ENCODE measurements at regions of chr4 and their contacts with region 1.

Region 1: GRCh38 chr4:153497988-153498967 is 32.1 kb downstream of the TMEM131L start:
- DNase-seq: peak in 3 of 14 experiments; percentile 43 to 52 (median 45)
- ATAC-seq: peak; percentile 32
- H3K4me3 ChIP-seq: peak overlapping the region; percentile 32
- H3K4me3 Mint-ChIP-seq: peak overlapping the region; percentile 84
- H3K27ac ChIP-seq: peak overlapping the region; percentile 82 to 90
- H3K27ac Mint-ChIP-seq: peak overlapping the region; percentile 92
- H3K4me1 ChIP-seq: peaks cover 85% of the 10 kb centered on the region
- H3K4me1 Mint-ChIP-seq: peaks cover 97% of the 10 kb centered on the region
- H3K27me3 ChIP-seq: no peaks in the 10 kb centered on the region
- H3K27me3 Mint-ChIP-seq: no peaks in the 10 kb centered on the region
- CTCF ChIP-seq: no peak

Region 2: GRCh38 chr4:153488006-153488891 is 10.0 kb before region 1 on chr4:
- CTCF ChIA-PET with region 1: interaction called, 11 read pairs
- POLR2A ChIA-PET with region 1: interaction called, 434 read pairs
- intact Hi-C with region 1: loop called in 1 of 2 experiments (anchors 1 kb)
- DNase-seq: peak in 13 of 14 experiments; percentile 50 to 94 (median 67)
- ATAC-seq: peak; percentile 65
- H3K4me3 ChIP-seq: peak overlapping the region; percentile 57
- H3K4me3 Mint-ChIP-seq: peak overlapping the region; percentile 88
- H3K27ac ChIP-seq: peak overlapping the region; percentile 92 to 94
- H3K27ac Mint-ChIP-seq: peak overlapping the region; percentile 92
- H3K4me1 ChIP-seq: peaks cover 68% of the 10 kb centered on the region
- H3K4me1 Mint-ChIP-seq: peaks cover 82% of the 10 kb centered on the region
- H3K27me3 ChIP-seq: no peaks in the 10 kb centered on the region
- H3K27me3 Mint-ChIP-seq: no peaks in the 10 kb centered on the region
- CTCF ChIP-seq: no peak

Region 3: DNA sequence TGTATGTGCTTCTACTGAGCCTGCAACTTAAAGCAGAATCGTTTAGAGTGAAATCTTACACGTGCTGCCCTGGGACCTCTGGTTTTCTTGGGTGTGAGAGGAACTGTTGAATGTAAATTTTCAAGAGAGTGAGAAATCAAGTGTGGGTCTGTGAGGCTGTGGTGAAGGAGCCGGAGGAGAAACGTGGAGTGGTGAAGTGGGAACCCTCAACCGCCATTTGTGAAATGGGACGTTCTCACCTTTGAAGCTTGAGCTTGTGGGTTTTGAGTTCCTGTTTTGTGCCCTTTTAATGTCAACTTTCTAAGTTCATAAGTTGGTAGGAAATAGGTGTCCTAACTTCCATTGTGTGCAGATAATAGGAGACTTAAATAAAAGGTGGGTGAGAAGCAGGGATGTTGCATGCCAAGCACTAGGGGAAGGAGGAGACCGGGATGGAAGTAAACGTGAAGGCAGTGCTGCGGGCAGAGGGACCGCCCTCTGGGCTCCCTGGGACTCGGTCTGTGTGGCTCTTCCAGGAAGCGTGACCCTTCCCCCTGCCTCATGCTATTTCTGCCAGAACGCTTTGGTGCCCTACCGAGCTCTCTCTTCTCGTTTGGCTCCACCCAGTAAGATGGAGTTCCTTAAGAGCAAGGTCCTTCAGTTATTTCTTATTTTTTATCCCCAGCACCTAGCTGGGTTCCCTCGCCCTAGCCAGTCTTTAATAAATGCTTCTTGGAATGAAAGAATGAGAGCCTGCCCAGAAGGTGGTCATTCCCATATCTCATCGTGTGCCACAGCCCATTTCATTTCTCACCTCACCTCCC is 23.9 kb after region 1 on chr4:
- CTCF ChIA-PET with region 1: interaction called, 4 read pairs
- POLR2A ChIA-PET with region 1: interaction called, 79 read pairs
- intact Hi-C with region 1: loop called (anchors 1 to 2 kb)
- DNase-seq: peak in 13 of 14 experiments; percentile 33 to 85 (median 55)
- ATAC-seq: peak; percentile 56
- H3K4me3 ChIP-seq: peak overlapping the region; percentile 28
- H3K4me3 Mint-ChIP-seq: peak overlapping the region; percentile 85
- H3K27ac ChIP-seq: peak overlapping the region; percentile 66 to 81
- H3K27ac Mint-ChIP-seq: peak overlapping the region; percentile 91
- H3K4me1 ChIP-seq: peaks cover 93% of the 10 kb centered on the region
- H3K4me1 Mint-ChIP-seq: peaks cover 94% of the 10 kb centered on the region
- H3K27me3 ChIP-seq: no peaks in the 10 kb centered on the region
- H3K27me3 Mint-ChIP-seq: no peaks in the 10 kb centered on the region
- CTCF ChIP-seq: no peak

Region 4: DNA sequence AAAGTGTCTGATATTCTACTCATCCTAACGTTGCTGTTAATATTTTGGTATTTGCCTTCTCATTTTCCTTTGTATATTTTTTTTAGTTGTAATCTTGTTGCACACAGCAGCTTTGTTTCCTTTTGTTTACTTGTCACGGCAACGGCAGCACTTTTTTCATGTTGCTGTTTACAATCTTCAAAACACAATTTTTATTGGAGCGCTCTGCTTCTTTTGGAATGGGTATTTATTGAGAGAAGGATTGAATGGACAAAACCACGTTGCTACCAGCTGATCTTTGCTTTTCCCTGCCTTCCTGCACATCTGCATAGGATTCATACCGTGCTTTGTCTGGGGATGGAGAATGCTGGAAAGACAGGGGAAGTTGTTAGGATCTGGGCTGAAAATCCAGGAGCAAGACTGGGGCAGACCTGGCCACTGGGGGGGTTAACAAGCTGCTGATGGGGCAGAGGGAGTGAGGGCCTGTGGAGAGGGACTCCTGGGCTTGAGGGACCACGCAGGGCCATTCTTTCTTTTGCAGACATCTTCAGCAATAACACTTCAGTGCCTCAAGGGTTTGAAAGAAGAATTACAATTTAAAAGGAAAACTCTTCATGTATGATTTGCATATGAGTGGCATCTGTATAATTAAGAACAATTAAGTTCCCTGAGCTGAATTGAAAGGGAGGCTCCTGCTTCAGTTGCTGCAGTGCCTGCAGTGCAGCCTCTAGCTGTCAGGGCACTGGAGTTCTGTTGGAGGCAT is 37.7 kb after region 1 on chr4:
- CTCF ChIA-PET with region 1: interaction called, 10 read pairs
- POLR2A ChIA-PET with region 1: interaction called, 18 read pairs
- intact Hi-C with region 1: no loop called
- DNase-seq: peak in 3 of 14 experiments; percentile 33 to 51 (median 45)
- ATAC-seq: peak; percentile 62
- H3K4me3 ChIP-seq: no peak overlapping the region
- H3K4me3 Mint-ChIP-seq: peak overlapping the region; percentile 82
- H3K27ac ChIP-seq: peak overlapping the region; percentile 52 to 64
- H3K27ac Mint-ChIP-seq: peak overlapping the region; percentile 91
- H3K4me1 ChIP-seq: peaks cover 68% of the 10 kb centered on the region
- H3K4me1 Mint-ChIP-seq: peaks cover 94% of the 10 kb centered on the region
- H3K27me3 ChIP-seq: no peaks in the 10 kb centered on the region
- H3K27me3 Mint-ChIP-seq: no peaks in the 10 kb centered on the region
- CTCF ChIP-seq: no peak